WTC11 (cell line): ENCODE measurements at regions of chr14 and their contacts with region 1.

Region 1: GRCh38 chr14:90758028-90758889 is 58.0 kb downstream of the TTC7B start:
- DNase-seq: peak; percentile 94
- ATAC-seq: peak; percentile 85
- H3K4me3 Mint-ChIP-seq: peak overlapping the region; percentile 59
- H3K27ac Mint-ChIP-seq: no peak overlapping the region
- H3K4me1 Mint-ChIP-seq: peaks cover 33% of the 10 kb centered on the region
- H3K27me3 Mint-ChIP-seq: peaks cover 10% of the 10 kb centered on the region
- CTCF ChIP-seq: peak; percentile 65

Region 2: GRCh38 chr14:90288651-90289355 is 469.5 kb before region 1 on chr14:
- CTCF ChIA-PET with region 1: interaction called, 33 read pairs
- POLR2A ChIA-PET with region 1: no interaction called
- DNase-seq: no peak
- ATAC-seq: no peak
- H3K4me3 Mint-ChIP-seq: no peak overlapping the region
- H3K27ac Mint-ChIP-seq: no peak overlapping the region
- H3K4me1 Mint-ChIP-seq: peaks cover 18% of the 10 kb centered on the region
- H3K27me3 Mint-ChIP-seq: no peaks in the 10 kb centered on the region
- CTCF ChIP-seq: no peak

Region 3: GRCh38 chr14:90383075-90383730 is 375.1 kb before region 1 on chr14:
- CTCF ChIA-PET with region 1: interaction called, 10 read pairs
- POLR2A ChIA-PET with region 1: interaction called, 4 read pairs
- DNase-seq: peak; percentile 99
- ATAC-seq: peak; percentile 94
- H3K4me3 Mint-ChIP-seq: no peak overlapping the region
- H3K27ac Mint-ChIP-seq: no peak overlapping the region
- H3K4me1 Mint-ChIP-seq: peaks cover 12% of the 10 kb centered on the region
- H3K27me3 Mint-ChIP-seq: no peaks in the 10 kb centered on the region; the same call in 1 of the 2 replicates
- CTCF ChIP-seq: no peak

Region 4: DNA sequence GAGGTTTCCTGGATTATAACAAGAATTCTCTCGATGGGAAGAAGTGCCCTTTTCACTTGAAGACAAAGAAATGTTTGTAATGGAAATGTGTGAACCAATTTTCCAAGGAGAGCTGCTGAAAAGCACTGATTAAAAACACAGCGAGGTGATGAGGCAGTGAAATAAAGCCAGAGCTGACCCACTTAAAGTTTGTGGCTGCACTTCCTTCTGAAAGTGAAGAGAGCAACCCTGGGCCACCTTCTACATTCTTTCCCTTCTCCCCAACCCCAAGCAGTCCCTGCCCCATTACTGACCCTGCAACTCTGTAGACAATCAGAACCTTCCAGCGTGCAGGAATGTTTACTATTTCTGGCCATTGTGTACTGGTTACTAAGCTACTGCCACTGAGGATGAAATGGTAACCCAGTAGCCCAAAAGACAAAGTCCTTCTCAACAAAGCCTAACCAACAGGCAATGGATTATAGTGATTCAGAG is 116.0 kb before region 1 on chr14:
- CTCF ChIA-PET with region 1: interaction called, 11 read pairs
- POLR2A ChIA-PET with region 1: no interaction called
- DNase-seq: peak; percentile 31
- ATAC-seq: peak; percentile 87
- H3K4me3 Mint-ChIP-seq: peak overlapping the region; percentile 16
- H3K27ac Mint-ChIP-seq: peak overlapping the region; percentile 95
- H3K4me1 Mint-ChIP-seq: peaks cover 70% of the 10 kb centered on the region
- H3K27me3 Mint-ChIP-seq: no peaks in the 10 kb centered on the region
- CTCF ChIP-seq: no peak

Region 5: GRCh38 chr14:90717916-90718315 is 40.3 kb before region 1 on chr14:
- CTCF ChIA-PET with region 1: interaction called, 19 read pairs
- POLR2A ChIA-PET with region 1: no interaction called
- DNase-seq: no peak
- ATAC-seq: peak; percentile 49
- H3K4me3 Mint-ChIP-seq: no peak overlapping the region
- H3K27ac Mint-ChIP-seq: peak overlapping the region; percentile 28
- H3K4me1 Mint-ChIP-seq: peaks cover 40% of the 10 kb centered on the region
- H3K27me3 Mint-ChIP-seq: no peaks in the 10 kb centered on the region
- CTCF ChIP-seq: no peak

Region 6: GRCh38 chr14:90742729-90743128 is 15.5 kb before region 1 on chr14:
- CTCF ChIA-PET with region 1: interaction called, 28 read pairs
- POLR2A ChIA-PET with region 1: interaction called, 3 read pairs
- DNase-seq: no peak
- ATAC-seq: no peak
- H3K4me3 Mint-ChIP-seq: no peak overlapping the region
- H3K27ac Mint-ChIP-seq: no peak overlapping the region; the same call in 1 of the 2 replicates
- H3K4me1 Mint-ChIP-seq: no peaks in the 10 kb centered on the region
- H3K27me3 Mint-ChIP-seq: no peaks in the 10 kb centered on the region
- CTCF ChIP-seq: no peak

Region 7: DNA sequence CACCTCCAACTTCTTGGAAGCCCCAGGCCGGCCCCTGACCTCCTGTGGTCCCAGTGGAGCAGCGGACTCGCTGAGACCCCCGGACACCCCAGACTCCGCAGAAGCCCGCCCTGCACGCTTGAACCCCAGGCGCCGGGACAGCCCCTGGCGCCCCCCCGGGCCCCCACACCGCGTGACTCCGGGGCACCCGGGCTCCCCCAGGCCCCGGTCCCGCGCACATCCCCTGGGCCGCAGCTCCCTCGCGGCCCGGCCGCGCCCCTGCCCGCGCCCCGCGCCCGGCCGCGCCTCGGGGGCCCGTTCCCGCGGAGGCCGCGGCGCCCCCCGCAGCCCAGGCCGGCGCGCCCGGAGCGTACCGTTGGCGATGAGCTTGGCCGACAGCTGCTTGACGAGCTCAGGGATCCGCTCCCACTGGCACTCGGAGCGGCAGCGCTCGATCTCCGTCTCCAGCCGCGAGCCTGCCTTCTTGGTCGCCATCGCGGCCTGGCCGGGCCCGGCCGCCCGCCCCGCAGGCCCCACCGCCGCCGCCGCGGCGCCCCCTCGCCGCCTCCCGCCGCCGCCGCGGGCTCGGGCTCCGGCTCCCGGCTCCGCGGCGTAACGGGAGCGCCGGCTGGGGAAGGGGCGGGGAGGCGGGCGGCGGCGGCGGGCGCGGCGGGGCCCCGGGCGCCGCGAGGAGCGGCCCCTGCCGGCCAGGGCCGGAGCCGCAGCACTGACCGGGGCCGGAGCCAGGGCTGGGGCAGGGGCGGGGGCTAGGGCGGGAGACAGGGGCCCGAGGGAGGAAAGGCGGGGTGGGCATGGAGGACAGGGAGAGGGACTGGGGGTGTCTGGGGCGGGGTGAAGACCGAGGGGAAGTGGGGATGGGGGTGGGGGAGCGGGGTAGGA is 57.8 kb after region 1 on chr14 and contains the start of gene TTC7B:
- CTCF ChIA-PET with region 1: interaction called, 51 read pairs
- POLR2A ChIA-PET with region 1: no interaction called
- DNase-seq: peak; percentile 64
- ATAC-seq: peak; percentile 88
- H3K4me3 Mint-ChIP-seq: peak within 1 kb of the TSS; percentile 73
- H3K27ac Mint-ChIP-seq: no peak within 1 kb of the TSS
- H3K4me1 Mint-ChIP-seq: peaks cover 6% of the 10 kb centered on the region
- H3K27me3 Mint-ChIP-seq: peaks cover 25% of the 10 kb centered on the region
- CTCF ChIP-seq: no peak
- total RNA-seq, gene TTC7B: 27.6 to 37.0 TPM (median 31.7 TPM) in 3 replicates